Activated CD4-positive, alpha-beta T cell treated with anti-CD3 and anti-CD28 coated beads for 36 hours (primary cell): ENCODE measurements at regions of chr2 and their contacts with region 1.

Region 1: DNA sequence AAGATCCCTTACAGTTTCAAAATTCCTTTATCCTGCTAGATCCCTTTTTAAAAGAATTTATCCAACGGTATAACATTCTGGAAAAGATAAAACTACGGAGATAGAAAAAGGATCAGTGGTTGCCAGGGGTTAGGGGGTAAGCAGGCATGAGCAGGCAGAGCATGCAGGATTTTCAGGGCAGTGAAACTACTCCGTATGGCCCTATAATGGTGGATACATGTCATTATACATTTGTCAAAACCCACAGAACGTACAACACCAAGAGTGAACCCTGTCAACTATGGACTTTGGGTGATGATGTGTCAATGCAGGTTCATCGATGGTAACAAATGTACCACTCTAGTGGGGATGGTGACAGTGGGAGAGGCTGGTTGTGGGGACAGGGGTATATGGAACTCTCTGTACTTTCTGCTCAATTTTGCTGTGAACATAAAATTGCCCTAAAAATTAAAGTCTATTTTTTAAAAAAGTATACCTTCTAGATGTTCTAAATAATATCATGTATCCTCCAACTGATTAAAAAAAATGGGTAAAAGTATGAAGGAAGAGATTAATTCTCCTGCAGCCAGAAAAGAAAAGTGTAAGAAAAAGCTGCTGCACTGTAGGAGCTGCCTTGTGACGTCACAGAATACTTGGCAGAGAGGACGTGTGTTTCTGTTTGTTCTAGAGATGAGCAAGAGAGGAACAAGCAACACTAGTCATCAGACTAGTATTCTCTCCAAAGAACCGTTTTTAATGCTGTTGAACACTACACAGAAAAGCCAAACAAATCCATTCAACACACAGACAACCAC is 23.6 kb downstream of the ANKRD44 start:
- DNase-seq: peak; percentile 70
- ATAC-seq: peak; percentile 92
- H3K4me3 Mint-ChIP-seq: peak overlapping the region; percentile 65
- H3K27ac Mint-ChIP-seq: peak overlapping the region; percentile 100
- H3K4me1 Mint-ChIP-seq: peaks cover 81% of the 10 kb centered on the region
- H3K27me3 Mint-ChIP-seq: no peaks in the 10 kb centered on the region

Region 2: GRCh38 chr2:197248623-197249022 is 38.4 kb before region 1 on chr2:
- CTCF ChIA-PET with region 1: no interaction called
- POLR2A ChIA-PET with region 1: no interaction called
- intact Hi-C with region 1: no loop called
- DNase-seq: peak; percentile 57
- ATAC-seq: peak; percentile 57
- H3K4me3 Mint-ChIP-seq: peak overlapping the region; percentile 26
- H3K27ac Mint-ChIP-seq: peak overlapping the region; percentile 81
- H3K4me1 Mint-ChIP-seq: peaks cover 81% of the 10 kb centered on the region
- H3K27me3 Mint-ChIP-seq: no peaks in the 10 kb centered on the region

Region 3: GRCh38 chr2:197268786-197269584 is 18.0 kb before region 1 on chr2:
- CTCF ChIA-PET with region 1: interaction called, 6 read pairs
- POLR2A ChIA-PET with region 1: interaction called, 4 read pairs
- intact Hi-C with region 1: loop called (anchors 2 kb)
- DNase-seq: peak; percentile 70
- ATAC-seq: peak; percentile 77
- H3K4me3 Mint-ChIP-seq: peak overlapping the region; percentile 44
- H3K27ac Mint-ChIP-seq: peak overlapping the region; percentile 91
- H3K4me1 Mint-ChIP-seq: peaks cover 89% of the 10 kb centered on the region
- H3K27me3 Mint-ChIP-seq: no peaks in the 10 kb centered on the region

Region 4: DNA sequence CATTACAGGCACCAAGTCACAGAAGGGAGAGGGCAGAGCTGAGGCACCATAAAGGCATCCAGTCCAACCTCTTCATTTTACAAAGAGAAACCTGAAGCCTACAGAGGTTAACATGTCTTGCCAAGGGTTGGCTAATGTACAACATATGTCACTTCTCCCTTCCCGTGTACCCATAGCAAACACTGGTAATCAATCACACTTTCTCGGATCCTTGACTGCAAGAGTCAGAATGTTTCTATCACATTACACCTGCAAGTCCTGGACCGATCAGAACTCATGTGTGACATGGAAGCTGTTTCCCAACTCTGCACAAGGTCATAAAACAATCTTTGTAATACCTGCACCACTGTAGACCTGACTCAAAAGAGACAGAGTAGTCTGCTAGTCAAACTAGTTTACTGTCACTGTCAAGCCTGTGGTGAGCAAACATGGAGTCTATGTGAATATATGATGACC is 17.6 kb after region 1 on chr2:
- CTCF ChIA-PET with region 1: interaction called, 6 read pairs
- POLR2A ChIA-PET with region 1: no interaction called
- intact Hi-C with region 1: loop called in 1 of 2 experiments (anchors 2 kb)
- DNase-seq: peak; percentile 56
- ATAC-seq: peak; percentile 70
- H3K4me3 Mint-ChIP-seq: peak overlapping the region; percentile 93
- H3K27ac Mint-ChIP-seq: peak overlapping the region; percentile 98
- H3K4me1 Mint-ChIP-seq: peaks cover 80% of the 10 kb centered on the region
- H3K27me3 Mint-ChIP-seq: no peaks in the 10 kb centered on the region

Region 5: GRCh38 chr2:197740200-197740599 is 453.2 kb after region 1 on chr2:
- CTCF ChIA-PET with region 1: no interaction called
- POLR2A ChIA-PET with region 1: no interaction called
- intact Hi-C with region 1: no loop called
- DNase-seq: no peak
- ATAC-seq: no peak
- H3K4me3 Mint-ChIP-seq: no peak overlapping the region
- H3K27ac Mint-ChIP-seq: no peak overlapping the region
- H3K4me1 Mint-ChIP-seq: no peaks in the 10 kb centered on the region
- H3K27me3 Mint-ChIP-seq: peaks cover 14% of the 10 kb centered on the region